GM23248 (cell line): ENCODE measurements at regions of chr11 and their contacts with region 1.

Region 1: DNA sequence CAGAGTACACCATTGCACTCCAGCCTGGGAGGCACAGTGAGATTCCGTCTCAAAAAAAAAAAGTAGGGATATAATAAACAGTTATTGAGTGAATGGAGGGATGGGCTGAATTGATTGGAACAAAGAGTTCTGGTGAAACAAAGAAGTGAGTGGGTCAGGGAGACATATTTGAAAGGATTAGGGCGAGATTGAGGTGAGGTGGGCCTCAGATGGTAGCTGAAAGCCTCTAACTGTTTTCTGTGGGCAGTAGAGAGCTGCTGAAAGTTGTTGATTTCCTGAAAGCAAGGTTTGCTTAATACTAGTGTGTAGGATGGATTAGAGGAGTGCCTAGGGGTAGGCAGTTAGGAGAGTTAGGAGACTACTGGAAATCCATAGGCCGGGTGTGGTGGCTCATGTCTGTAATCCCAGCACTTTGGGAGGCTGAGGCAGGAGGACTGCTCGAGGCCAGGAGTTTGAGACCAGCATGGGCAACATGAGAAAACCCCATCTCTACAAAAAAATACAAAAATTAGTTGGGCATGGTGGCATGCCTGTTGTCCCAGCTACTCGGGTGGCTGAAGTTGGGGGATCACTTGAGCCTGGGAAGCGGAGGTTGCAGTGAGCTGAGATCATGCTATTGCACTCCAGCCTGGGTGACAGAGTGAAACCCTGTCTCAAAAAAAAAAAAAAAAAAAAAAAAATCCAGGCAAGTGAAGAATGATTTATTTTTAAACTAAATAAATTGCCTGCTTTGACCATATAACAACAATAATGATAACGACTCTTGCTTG is 41.4 kb upstream of the PTPRJ start:
- DNase-seq: no peak
- H3K4me3 ChIP-seq: no peak overlapping the region
- H3K27ac ChIP-seq: peak overlapping the region; percentile 16; the same call in 1 of the 2 replicates
- H3K4me1 ChIP-seq: peaks cover 28% of the 10 kb centered on the region
- H3K27me3 ChIP-seq: no peaks in the 10 kb centered on the region

Region 2: DNA sequence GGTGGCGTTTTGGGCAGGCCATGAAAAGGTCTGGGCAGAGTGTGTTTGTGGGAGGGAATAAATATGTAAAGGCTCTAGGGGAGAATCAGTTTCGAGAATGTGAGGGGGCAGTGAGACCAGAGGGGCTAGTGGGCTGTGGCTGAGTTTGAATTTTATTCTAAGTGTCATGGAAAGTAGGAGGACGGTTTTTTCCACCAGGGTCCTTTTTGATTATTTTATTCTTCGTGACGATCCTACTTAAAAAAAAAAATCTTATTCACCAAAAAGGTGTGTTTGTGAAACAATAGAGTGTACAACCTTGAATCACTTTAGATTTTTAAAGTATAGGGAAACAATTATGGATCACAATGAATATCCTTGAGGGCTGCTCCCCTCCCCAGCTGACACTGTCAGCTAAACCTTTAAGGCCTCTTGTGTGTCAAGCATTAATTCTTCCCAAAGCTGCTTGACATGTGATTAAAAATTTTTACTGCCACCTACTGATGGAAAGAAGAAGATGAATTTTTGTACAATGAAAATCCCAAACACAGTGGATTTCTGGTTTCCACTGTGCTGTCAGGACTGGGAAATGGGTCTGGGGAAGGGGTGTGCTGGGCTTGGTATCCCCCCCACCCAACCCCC is 170.2 kb after region 1 on chr11:
- in situ Hi-C with region 1: loop called (anchors 5 kb)
- DNase-seq: peak; percentile 68
- H3K4me3 ChIP-seq: no peak overlapping the region
- H3K27ac ChIP-seq: no peak overlapping the region
- H3K4me1 ChIP-seq: peaks cover 35% of the 10 kb centered on the region
- H3K27me3 ChIP-seq: no peaks in the 10 kb centered on the region